ENCODE measurements at regions of chr15 and their contacts with region 1.

Region 1: GRCh38 chr15:63729115-63729884 is 104.4 kb downstream of the HERC1 start:
- ATAC-seq: no peak
- H3K4me3 ChIP-seq: no peak overlapping the region
- H3K27ac ChIP-seq: no peak overlapping the region
- H3K4me1 ChIP-seq: no peaks in the 10 kb centered on the region

Region 2: DNA sequence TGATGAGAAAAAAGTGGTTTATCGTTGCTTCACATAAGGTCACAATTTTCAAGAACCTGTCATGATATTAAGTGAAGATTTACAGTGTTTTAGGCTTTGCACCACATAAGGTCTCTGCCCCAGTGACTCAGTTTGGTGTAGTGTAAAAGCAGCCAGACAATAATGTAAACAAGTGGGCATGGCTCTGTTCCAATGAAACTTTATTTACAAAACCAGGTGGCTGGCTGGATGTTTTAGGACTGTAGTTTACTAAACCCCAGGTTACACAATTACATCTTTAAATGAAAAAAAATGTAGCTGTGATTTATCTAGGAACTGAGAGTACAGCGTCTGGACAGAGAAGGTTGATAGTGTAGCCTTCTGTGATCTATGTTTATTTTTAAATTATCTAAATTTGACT is 141.8 kb before region 1 on chr15:
- in situ Hi-C with region 1: no loop called
- ATAC-seq: no peak
- H3K4me3 ChIP-seq: no peak overlapping the region
- H3K27ac ChIP-seq: no peak overlapping the region
- H3K4me1 ChIP-seq: no peaks in the 10 kb centered on the region

Region 3: DNA sequence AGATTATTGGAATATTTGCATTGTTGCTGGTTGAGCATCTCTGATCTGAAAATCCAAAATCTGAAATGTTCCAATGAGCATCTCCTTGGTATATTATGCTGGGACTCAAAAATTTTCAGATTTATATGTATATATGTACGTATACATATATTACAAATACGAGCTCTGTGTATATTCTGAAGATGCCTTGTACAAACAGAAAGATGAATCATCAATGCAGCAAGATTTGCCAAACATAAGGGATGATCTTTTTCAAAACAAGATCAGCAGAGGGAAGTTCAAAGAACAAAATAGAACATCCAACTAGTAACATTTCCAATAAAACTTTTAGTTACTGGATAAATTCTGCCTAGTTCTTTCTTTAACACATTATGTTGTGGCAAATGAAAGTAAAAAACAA is 61.9 kb after region 1 on chr15:
- in situ Hi-C with region 1: no loop called
- ATAC-seq: peak in 1 of 8 experiments; percentile 65
- H3K4me3 ChIP-seq: no peak overlapping the region
- H3K27ac ChIP-seq: no peak overlapping the region
- H3K4me1 ChIP-seq: no peaks in the 10 kb centered on the region

Region 4: DNA sequence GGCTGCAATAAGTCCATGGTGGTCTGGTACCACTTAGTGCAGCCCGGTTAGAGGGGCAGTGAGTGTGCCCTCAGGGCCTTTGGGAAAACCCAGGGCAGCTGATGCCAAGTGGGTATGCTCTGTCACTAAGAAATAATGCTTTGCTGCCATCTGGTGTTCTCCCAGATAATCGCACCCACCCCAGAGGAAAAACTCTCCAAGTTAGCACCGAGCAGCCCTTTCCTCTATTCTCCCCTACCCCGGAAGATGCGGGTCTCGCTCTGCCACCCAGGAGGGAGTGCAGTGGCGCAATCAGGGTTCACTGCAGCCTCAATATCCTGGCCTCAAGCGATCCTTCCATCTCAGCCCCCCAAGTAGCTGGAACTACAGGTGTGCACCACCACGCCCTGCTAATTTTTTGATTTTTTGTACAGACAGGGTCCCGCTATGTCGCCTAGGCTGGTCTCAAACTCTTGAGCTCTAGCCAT is 338.3 kb after region 1 on chr15:
- in situ Hi-C with region 1: loop called in 1 of 9 experiments (anchors 25 kb)
- ATAC-seq: peak; percentile 23 to 91 (median 76)
- H3K4me3 ChIP-seq: no peak overlapping the region
- H3K27ac ChIP-seq: no peak overlapping the region
- H3K4me1 ChIP-seq: no peaks in the 10 kb centered on the region

Measured in motor neuron (in vitro differentiated cells).